Caco-2 (cell line): ENCODE measurements at regions of chr7 and their contacts with region 1.

Region 1: GRCh38 chr7:110675383-110676103 is 415.4 kb upstream of the LRRN3 start:
- DNase-seq: no peak
- H3K4me3 ChIP-seq: no peak overlapping the region
- H3K4me3 Mint-ChIP-seq: no peak overlapping the region
- H3K27ac Mint-ChIP-seq: peak overlapping the region; percentile 96
- H3K4me1 ChIP-seq: peaks cover 29% of the 10 kb centered on the region
- H3K4me1 Mint-ChIP-seq: peaks cover 14% of the 10 kb centered on the region
- H3K27me3 ChIP-seq: no peaks in the 10 kb centered on the region
- H3K27me3 Mint-ChIP-seq: no peaks in the 10 kb centered on the region
- CTCF ChIP-seq: no peak

Region 2: GRCh38 chr7:110186331-110186730 is 489.2 kb before region 1 on chr7:
- CTCF ChIA-PET with region 1: no interaction called
- POLR2A ChIA-PET with region 1: no interaction called
- intact Hi-C with region 1: loop called (anchors 1 kb)
- DNase-seq: peak in 1 of 2 experiments; percentile 57
- H3K4me3 ChIP-seq: no peak overlapping the region
- H3K4me3 Mint-ChIP-seq: no peak overlapping the region
- H3K27ac Mint-ChIP-seq: no peak overlapping the region
- H3K4me1 ChIP-seq: peaks cover 10% of the 10 kb centered on the region
- H3K4me1 Mint-ChIP-seq: no peaks in the 10 kb centered on the region
- H3K27me3 ChIP-seq: no peaks in the 10 kb centered on the region
- H3K27me3 Mint-ChIP-seq: no peaks in the 10 kb centered on the region
- CTCF ChIP-seq: no peak

Region 3: DNA sequence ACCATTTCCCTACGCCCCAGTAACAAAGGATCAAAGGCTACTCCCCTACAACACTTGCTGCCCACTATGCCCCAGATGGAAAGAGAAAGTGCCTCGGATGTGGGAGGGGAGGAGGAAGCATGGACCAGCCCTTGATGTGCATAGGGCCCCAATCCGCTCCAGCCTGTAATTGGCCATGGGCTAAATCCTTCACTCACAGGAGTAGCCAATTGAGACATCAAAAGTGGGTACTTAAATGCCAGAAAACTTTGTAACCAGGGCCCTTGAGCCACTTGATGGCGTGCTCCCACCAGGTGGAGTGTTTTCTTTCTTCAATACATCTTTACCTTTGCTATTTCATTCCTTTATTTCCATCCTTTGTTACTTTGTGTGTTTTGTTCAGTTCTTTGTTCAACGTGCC is 85.1 kb before region 1 on chr7:
- CTCF ChIA-PET with region 1: no interaction called
- POLR2A ChIA-PET with region 1: no interaction called
- intact Hi-C with region 1: no loop called
- DNase-seq: no peak
- H3K4me3 ChIP-seq: no peak overlapping the region
- H3K4me3 Mint-ChIP-seq: no peak overlapping the region
- H3K27ac Mint-ChIP-seq: no peak overlapping the region
- H3K4me1 ChIP-seq: no peaks in the 10 kb centered on the region
- H3K4me1 Mint-ChIP-seq: no peaks in the 10 kb centered on the region
- H3K27me3 ChIP-seq: no peaks in the 10 kb centered on the region
- H3K27me3 Mint-ChIP-seq: no peaks in the 10 kb centered on the region
- CTCF ChIP-seq: no peak

Region 4: GRCh38 chr7:110607050-110607857 is 68.3 kb before region 1 on chr7:
- CTCF ChIA-PET with region 1: no interaction called
- POLR2A ChIA-PET with region 1: no interaction called
- intact Hi-C with region 1: no loop called
- DNase-seq: no peak
- H3K4me3 ChIP-seq: no peak overlapping the region
- H3K4me3 Mint-ChIP-seq: no peak overlapping the region
- H3K27ac Mint-ChIP-seq: no peak overlapping the region
- H3K4me1 ChIP-seq: no peaks in the 10 kb centered on the region
- H3K4me1 Mint-ChIP-seq: no peaks in the 10 kb centered on the region
- H3K27me3 ChIP-seq: no peaks in the 10 kb centered on the region
- H3K27me3 Mint-ChIP-seq: no peaks in the 10 kb centered on the region
- CTCF ChIP-seq: no peak

Region 5: DNA sequence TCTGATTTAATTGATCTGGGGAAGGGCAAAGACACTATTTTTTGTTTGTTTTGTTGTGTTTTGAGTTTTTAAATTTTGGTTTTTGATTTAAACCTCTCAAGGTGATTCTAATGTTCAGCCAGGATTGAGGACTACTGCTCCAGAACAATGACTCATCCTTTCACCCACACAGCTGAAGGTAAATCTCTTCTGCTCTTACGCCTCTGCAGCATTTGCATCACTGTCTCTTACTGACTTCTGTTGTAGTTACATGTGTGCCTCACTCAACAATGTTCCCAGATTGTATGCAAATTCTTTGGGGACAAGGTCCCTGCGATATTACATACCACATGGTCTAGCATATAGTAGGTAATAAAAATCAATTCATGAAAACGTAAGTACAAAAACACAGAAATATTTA is 52.1 kb before region 1 on chr7:
- CTCF ChIA-PET with region 1: no interaction called
- POLR2A ChIA-PET with region 1: no interaction called
- intact Hi-C with region 1: no loop called
- DNase-seq: no peak
- H3K4me3 ChIP-seq: no peak overlapping the region
- H3K4me3 Mint-ChIP-seq: no peak overlapping the region
- H3K27ac Mint-ChIP-seq: no peak overlapping the region
- H3K4me1 ChIP-seq: no peaks in the 10 kb centered on the region
- H3K4me1 Mint-ChIP-seq: no peaks in the 10 kb centered on the region
- H3K27me3 ChIP-seq: no peaks in the 10 kb centered on the region
- H3K27me3 Mint-ChIP-seq: peaks cover 4% of the 10 kb centered on the region
- CTCF ChIP-seq: no peak

Region 6: DNA sequence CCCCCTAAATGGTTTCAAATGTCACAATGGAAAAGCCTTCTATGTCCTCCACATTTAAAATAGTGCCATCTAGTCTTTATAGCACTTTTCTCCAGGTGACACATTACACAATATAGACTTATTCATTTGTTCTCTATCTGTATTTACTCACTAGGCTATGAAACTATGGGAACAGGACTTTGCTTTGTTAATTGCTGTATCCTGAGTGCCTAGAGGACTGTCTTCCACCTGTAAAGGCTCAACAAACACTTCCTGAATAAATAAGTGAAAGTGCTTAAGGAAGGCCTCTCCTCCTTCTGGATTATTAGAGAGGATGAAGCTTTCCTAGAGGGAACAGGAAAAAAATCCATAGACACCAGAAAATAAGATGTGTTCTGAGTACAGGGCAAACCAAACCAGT is 17.8 kb after region 1 on chr7:
- CTCF ChIA-PET with region 1: no interaction called
- POLR2A ChIA-PET with region 1: no interaction called
- intact Hi-C with region 1: loop called (anchors 1 kb)
- DNase-seq: no peak
- H3K4me3 ChIP-seq: no peak overlapping the region
- H3K4me3 Mint-ChIP-seq: no peak overlapping the region
- H3K27ac Mint-ChIP-seq: no peak overlapping the region
- H3K4me1 ChIP-seq: no peaks in the 10 kb centered on the region
- H3K4me1 Mint-ChIP-seq: peaks cover 7% of the 10 kb centered on the region
- H3K27me3 ChIP-seq: no peaks in the 10 kb centered on the region
- H3K27me3 Mint-ChIP-seq: no peaks in the 10 kb centered on the region
- CTCF ChIP-seq: no peak

Region 7: GRCh38 chr7:110759069-110759468 is 83.5 kb after region 1 on chr7:
- CTCF ChIA-PET with region 1: no interaction called
- POLR2A ChIA-PET with region 1: no interaction called
- intact Hi-C with region 1: loop called (anchors 5 kb)
- DNase-seq: no peak
- H3K4me3 ChIP-seq: no peak overlapping the region
- H3K4me3 Mint-ChIP-seq: no peak overlapping the region
- H3K27ac Mint-ChIP-seq: no peak overlapping the region
- H3K4me1 ChIP-seq: no peaks in the 10 kb centered on the region
- H3K4me1 Mint-ChIP-seq: no peaks in the 10 kb centered on the region
- H3K27me3 ChIP-seq: no peaks in the 10 kb centered on the region
- H3K27me3 Mint-ChIP-seq: no peaks in the 10 kb centered on the region
- CTCF ChIP-seq: no peak

Region 8: GRCh38 chr7:110830778-110831177 is 155.2 kb after region 1 on chr7:
- CTCF ChIA-PET with region 1: no interaction called
- POLR2A ChIA-PET with region 1: no interaction called
- intact Hi-C with region 1: loop called (anchors 1 kb)
- DNase-seq: no peak
- H3K4me3 ChIP-seq: no peak overlapping the region
- H3K4me3 Mint-ChIP-seq: no peak overlapping the region
- H3K27ac Mint-ChIP-seq: no peak overlapping the region
- H3K4me1 ChIP-seq: no peaks in the 10 kb centered on the region; the same call in 1 of the 2 replicates
- H3K4me1 Mint-ChIP-seq: no peaks in the 10 kb centered on the region
- H3K27me3 ChIP-seq: no peaks in the 10 kb centered on the region
- H3K27me3 Mint-ChIP-seq: no peaks in the 10 kb centered on the region
- CTCF ChIP-seq: no peak

Region 9: GRCh38 chr7:111266613-111267012 is 591.1 kb after region 1 on chr7:
- CTCF ChIA-PET with region 1: no interaction called
- POLR2A ChIA-PET with region 1: no interaction called
- intact Hi-C with region 1: no loop called
- DNase-seq: no peak
- H3K4me3 ChIP-seq: no peak overlapping the region
- H3K4me3 Mint-ChIP-seq: no peak overlapping the region
- H3K27ac Mint-ChIP-seq: no peak overlapping the region
- H3K4me1 ChIP-seq: peaks cover 5% of the 10 kb centered on the region; the same call in 1 of the 2 replicates
- H3K4me1 Mint-ChIP-seq: peaks cover 19% of the 10 kb centered on the region
- H3K27me3 ChIP-seq: no peaks in the 10 kb centered on the region
- H3K27me3 Mint-ChIP-seq: no peaks in the 10 kb centered on the region
- CTCF ChIP-seq: no peak